Left cardiac atrium (tissue), 4 donors: ENCODE measurements at regions of chr19 and their contacts with region 1.

Region 1: GRCh38 chr19:38661136-38661535 is 13.7 kb downstream of the ACTN4 start:
- DNase-seq: no peak
- ATAC-seq: no peak

Region 2: DNA sequence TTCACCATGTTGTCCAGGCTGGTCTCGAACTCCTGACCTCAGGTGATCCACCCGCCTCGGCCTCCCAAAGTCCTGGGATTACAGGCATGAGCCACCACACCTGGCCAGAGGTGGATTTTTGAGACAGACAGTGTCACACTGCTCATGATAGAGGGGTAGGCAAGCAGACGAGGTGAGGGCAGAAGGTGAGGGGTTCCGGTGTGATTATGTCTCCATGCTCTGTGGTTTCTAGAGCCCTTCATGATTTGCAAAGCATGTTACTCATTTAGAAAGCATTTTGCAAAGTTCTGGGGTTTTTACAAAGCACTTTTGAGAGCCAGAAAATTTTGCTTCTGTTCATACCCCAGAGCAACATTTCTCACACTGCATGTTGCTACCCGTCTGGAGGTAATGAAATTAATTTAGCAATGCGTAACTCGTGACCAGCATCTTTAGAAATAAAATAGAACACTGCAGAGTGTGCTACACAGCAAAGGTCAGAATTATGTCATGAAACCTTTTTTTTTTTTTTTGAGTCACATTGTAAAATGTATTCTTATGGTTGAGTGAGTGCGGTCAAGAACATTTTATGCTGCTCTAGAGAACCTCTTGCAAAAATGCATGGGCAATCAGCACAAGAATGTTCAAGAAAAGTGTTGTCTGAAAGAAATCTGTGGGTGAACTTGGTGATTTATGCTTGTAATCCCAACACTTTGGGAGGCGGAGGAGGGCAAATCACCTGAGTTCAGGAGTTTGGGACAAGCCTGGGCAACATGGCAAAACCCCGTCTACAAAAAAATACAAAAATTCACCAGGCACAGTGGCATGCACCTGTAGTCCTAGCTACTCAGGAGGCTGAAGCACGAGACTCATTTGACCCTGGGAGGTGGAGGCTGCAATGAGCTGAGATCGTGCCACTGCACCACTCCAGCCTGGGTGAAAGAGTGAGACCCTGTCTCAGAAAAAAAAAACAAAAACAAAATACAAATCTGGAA is 101.4 kb before region 1 on chr19:
- intact Hi-C with region 1: no loop called
- DNase-seq: no peak
- ATAC-seq: no peak

Region 3: GRCh38 chr19:38707512-38708114 is 46.5 kb after region 1 on chr19:
- intact Hi-C with region 1: loop called (anchors 2 to 5 kb)
- DNase-seq: peak; percentile 88
- ATAC-seq: peak; percentile 23 to 40